Mammary epithelial cell (primary cell): ENCODE measurements at regions of chr2 and their contacts with region 1.

Region 1: DNA sequence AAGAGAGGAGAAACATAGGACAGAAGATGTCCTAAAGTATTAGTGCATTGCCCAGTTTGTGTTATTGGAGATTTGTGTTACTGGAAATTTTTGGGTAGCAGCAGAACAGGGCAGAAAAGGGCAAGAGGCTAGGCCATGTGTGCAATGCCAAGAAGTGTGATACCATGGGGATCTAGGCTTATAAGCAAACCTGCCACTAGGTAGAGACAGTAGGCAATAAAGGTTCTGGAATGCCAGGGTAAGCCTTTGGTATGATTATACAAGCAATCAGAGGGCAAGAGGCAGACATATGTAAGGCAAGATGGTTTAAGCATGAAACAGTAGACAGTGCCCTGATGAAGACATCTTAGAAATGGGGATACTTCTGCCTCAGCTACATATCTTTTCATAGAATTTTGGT is 12.3 kb upstream of the CERS6 start:
- DNase-seq: peak; percentile 42
- H3K4me3 ChIP-seq: no peak overlapping the region
- H3K27ac ChIP-seq: no peak overlapping the region
- H3K4me1 ChIP-seq: no peaks in the 10 kb centered on the region
- H3K27me3 ChIP-seq: no peaks in the 10 kb centered on the region
- CTCF ChIP-seq: peak; percentile 25 to 59

Region 2: GRCh38 chr2:168699844-168700417 is 256.1 kb after region 1 on chr2:
- CTCF ChIA-PET with region 1: no interaction called
- dilution Hi-C with region 1: no loop called
- in situ Hi-C with region 1: no loop called
- intact Hi-C with region 1: loop called (anchors 2 kb)
- DNase-seq: no peak
- H3K4me3 ChIP-seq: no peak overlapping the region
- H3K27ac ChIP-seq: no peak overlapping the region
- H3K4me1 ChIP-seq: peaks cover 17% of the 10 kb centered on the region
- H3K27me3 ChIP-seq: no peaks in the 10 kb centered on the region
- CTCF ChIP-seq: no peak

Region 3: GRCh38 chr2:168758970-168759820 is 315.4 kb after region 1 on chr2:
- CTCF ChIA-PET with region 1: no interaction called
- dilution Hi-C with region 1: no loop called
- in situ Hi-C with region 1: no loop called
- intact Hi-C with region 1: loop called (anchors 2 kb)
- DNase-seq: peak; percentile 45
- H3K4me3 ChIP-seq: no peak overlapping the region
- H3K27ac ChIP-seq: no peak overlapping the region
- H3K4me1 ChIP-seq: no peaks in the 10 kb centered on the region
- H3K27me3 ChIP-seq: no peaks in the 10 kb centered on the region
- CTCF ChIP-seq: peak; percentile 58 to 65

Region 4: GRCh38 chr2:168890006-168890782 is 446.4 kb after region 1 on chr2 and contains the start of gene SPC25:
- CTCF ChIA-PET with region 1: no interaction called
- dilution Hi-C with region 1: no loop called
- in situ Hi-C with region 1: no loop called
- intact Hi-C with region 1: no loop called
- DNase-seq: peak; percentile 89
- H3K4me3 ChIP-seq: peak within 1 kb of the TSS; percentile 73 to 85 (median 81)
- H3K27ac ChIP-seq: peak within 1 kb of the TSS; percentile 54
- H3K4me1 ChIP-seq: peaks cover 3% of the 10 kb centered on the region
- H3K27me3 ChIP-seq: no peaks in the 10 kb centered on the region
- CTCF ChIP-seq: no peak
- total RNA-seq, gene SPC25: 0.33 to 13.2 TPM